Mammary epithelial cell (primary cell): ENCODE measurements at regions of chr18 and their contacts with region 1.

Region 1: GRCh38 chr18:44520981-44521672 is 159.6 kb upstream of the SETBP1 start:
- DNase-seq: peak; percentile 74
- H3K4me3 ChIP-seq: no peak overlapping the region
- H3K27ac ChIP-seq: peak overlapping the region; percentile 82
- H3K4me1 ChIP-seq: peaks cover 40% of the 10 kb centered on the region
- H3K27me3 ChIP-seq: no peaks in the 10 kb centered on the region
- CTCF ChIP-seq: no peak

Region 2: GRCh38 chr18:44733069-44733753 is 212.1 kb after region 1 on chr18:
- CTCF ChIA-PET with region 1: no interaction called
- dilution Hi-C with region 1: no loop called
- in situ Hi-C with region 1: no loop called
- intact Hi-C with region 1: loop called (anchors 5 kb)
- DNase-seq: peak; percentile 93
- H3K4me3 ChIP-seq: no peak overlapping the region
- H3K27ac ChIP-seq: peak overlapping the region; percentile 88
- H3K4me1 ChIP-seq: peaks cover 56% of the 10 kb centered on the region
- H3K27me3 ChIP-seq: no peaks in the 10 kb centered on the region
- CTCF ChIP-seq: no peak